T-cell (primary cell): ENCODE measurements at regions of chr1 and their contacts with region 1.

Region 1: DNA sequence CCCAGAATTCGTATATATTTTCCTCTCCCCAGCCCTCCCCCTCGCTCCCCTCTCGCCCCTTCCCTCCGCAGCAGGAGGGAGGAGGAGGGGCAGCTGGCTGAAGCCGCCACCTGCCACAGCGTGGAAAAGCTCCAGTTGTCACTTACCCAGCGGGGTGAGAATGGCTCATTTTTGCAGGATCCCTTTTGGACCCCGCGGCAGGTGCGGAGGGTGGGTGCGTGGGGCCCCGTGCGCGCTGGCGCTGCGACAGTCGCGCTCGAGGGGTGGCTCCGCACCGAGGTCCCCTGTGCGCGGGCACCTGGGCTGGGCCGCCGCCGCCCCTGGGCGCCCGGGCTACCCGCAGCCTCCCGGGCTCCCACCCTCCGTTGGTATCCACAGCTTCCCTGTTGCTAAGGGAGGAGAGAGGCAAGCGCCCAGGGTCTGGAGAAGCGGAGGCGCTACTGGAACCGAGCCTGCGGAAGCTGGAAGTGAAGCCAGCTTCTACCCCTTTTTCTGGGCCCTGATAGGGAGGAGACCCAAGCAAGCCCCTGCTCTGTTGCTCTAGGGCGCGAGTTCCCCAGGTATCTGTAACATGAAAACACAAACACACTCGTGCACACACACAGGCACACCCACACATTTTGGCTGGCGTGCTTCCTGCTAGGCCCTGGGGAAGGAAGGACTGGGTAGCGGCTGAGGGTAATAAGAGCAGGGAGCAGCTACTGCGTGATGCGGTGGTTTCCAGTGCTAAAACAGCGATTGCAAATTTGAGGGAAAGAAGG is at the start of gene ERICH3:
- DNase-seq: no peak
- ATAC-seq: no peak
- H3K4me3 ChIP-seq: no peak within 1 kb of the TSS
- H3K4me3 Mint-ChIP-seq: no peak within 1 kb of the TSS
- H3K27ac ChIP-seq: no peak within 1 kb of the TSS
- H3K27ac Mint-ChIP-seq: no peak within 1 kb of the TSS
- H3K4me1 ChIP-seq: no peaks in the 10 kb centered on the region
- H3K4me1 Mint-ChIP-seq: peaks cover 4 to 6% (median 4%) of the 10 kb centered on the region in 3 donors
- H3K27me3 ChIP-seq: peaks cover 5 to 11% of the 10 kb centered on the region in 2 experiments
- H3K27me3 Mint-ChIP-seq: peaks cover 34 to 48% of the 10 kb centered on the region in 2 donors
- total RNA-seq, gene ERICH3: 0.03 TPM in 1 of 5 donors, not detected in the others

Region 2: DNA sequence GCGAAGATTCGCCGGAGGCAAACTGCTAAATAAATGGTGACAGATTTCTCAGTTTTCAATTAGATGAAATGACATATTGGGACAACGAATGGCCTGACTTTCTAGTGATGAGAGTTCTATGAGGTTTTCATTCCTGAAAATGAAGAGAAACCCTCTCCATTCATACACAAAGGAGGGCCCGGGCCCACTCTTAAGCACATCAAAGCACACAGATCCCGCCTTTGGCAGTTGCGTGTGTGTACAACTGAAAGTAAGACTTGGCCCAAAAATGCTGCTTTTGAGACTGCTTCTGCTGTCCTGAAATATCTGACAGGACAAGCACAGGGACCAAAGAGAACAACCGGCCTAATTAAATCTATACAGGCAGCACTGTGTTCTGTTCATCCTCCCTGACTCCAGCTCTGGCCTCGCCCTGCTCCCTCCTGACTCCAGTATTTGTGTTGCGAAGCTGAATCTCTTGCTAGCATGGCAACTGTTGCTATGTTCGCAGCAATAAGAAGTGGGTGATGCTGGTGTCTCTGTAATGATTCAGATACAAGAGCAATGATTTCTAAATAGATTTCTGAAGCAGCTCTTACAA is 168.5 kb before region 1 on chr1:
- CTCF ChIA-PET with region 1: interaction called in 1 of 2 experiments, 10 read pairs
- POLR2A ChIA-PET with region 1: no interaction called
- DNase-seq: no peak
- ATAC-seq: no peak
- H3K4me3 ChIP-seq: no peak overlapping the region
- H3K4me3 Mint-ChIP-seq: no peak overlapping the region
- H3K27ac ChIP-seq: no peak overlapping the region
- H3K27ac Mint-ChIP-seq: no peak overlapping the region
- H3K4me1 ChIP-seq: no peaks in the 10 kb centered on the region
- H3K4me1 Mint-ChIP-seq: peaks cover 0 to 2% (median 0%) of the 10 kb centered on the region in 3 donors
- H3K27me3 ChIP-seq: no peaks in the 10 kb centered on the region
- H3K27me3 Mint-ChIP-seq: peaks cover 0 to 4% of the 10 kb centered on the region in 2 donors